ENCODE measurements at regions of chr1 and their contacts with region 1.

Region 1: DNA sequence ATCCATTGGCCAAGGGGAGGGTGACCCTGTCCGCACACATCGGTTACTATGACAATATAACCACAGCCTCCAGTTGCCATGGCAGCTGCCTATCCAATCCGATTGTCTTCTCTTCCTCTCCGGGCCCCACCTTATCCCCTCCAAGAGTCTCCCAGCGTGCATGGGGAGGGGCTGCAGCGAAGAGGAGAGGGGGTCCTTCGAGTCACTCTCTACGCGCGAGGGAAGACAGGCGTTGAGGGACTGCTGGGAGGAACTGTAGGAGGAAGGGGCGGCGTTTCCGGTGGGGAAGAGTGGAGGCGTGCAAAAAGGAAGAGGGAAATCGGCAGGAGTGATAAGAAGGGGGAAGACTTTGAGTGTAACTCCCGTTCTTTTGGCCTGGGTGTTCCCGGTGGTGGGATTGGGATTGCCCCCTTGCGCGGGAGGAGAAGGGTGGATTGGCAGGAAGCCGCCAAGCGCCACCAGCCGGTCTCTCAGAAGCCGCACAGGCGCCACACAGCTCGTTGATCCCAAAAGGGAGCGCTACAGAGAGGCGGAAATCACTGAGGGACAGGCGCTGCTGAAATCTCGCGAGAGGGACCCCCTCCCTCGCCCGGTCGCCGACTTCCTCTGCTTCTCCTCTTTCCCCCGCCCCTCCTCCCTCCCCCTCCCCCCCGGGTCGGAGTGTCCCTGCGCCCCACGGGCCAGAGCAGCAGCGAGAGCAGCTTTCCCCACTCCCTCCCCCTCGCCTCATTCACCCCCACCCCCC is 384 bp upstream of the SMG7 start:
- DNase-seq: peak; percentile 99
- ATAC-seq: peak; percentile 86 to 89 (median 88)
- H3K4me3 ChIP-seq: peak overlapping the region; percentile 98
- H3K27ac ChIP-seq: peak overlapping the region; percentile 99
- H3K4me1 ChIP-seq: peaks cover 37% of the 10 kb centered on the region
- H3K27me3 ChIP-seq: no peaks in the 10 kb centered on the region
- CTCF ChIP-seq: no peak

Region 2: DNA sequence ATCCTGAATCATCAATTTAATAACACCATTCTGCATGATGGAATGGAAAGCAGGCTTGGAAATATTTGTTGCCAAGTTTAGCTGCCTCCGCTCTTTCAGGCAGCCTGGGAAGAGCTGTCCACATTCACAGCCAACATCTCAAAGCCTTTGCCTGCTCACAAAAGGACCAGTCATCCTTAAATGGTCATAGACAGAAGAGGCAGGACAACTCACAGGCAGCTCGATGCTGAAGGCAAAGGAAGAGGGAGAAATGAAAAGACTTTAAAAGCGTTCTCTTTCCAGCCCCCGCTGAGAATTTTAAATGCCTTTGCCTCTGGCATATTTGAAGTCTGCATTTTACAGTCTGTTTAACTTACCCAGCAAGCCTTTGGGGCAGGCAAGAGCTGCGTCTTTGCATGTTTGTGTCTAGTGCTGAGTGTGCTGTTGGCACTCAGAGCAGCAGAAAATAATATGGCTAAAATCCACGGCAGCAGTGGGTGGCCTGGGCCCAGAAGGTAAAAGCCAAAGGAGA is 122.7 kb before region 1 on chr1:
- intact Hi-C with region 1: no loop called
- DNase-seq: no peak
- ATAC-seq: no peak
- H3K4me3 ChIP-seq: no peak overlapping the region
- H3K27ac ChIP-seq: no peak overlapping the region
- H3K4me1 ChIP-seq: peaks cover 4% of the 10 kb centered on the region
- H3K27me3 ChIP-seq: peaks cover 0 to 3% (median 0%) of the 10 kb centered on the region in 3 donors
- CTCF ChIP-seq: no peak

Region 3: GRCh38 chr1:183543619-183544204 is 71.8 kb after region 1 on chr1:
- intact Hi-C with region 1: loop called (anchors 1 to 2 kb)
- DNase-seq: no peak
- ATAC-seq: peak; percentile 43 to 87 (median 70)
- H3K4me3 ChIP-seq: no peak overlapping the region
- H3K27ac ChIP-seq: no peak overlapping the region
- H3K4me1 ChIP-seq: no peaks in the 10 kb centered on the region
- H3K27me3 ChIP-seq: no peaks in the 10 kb centered on the region
- CTCF ChIP-seq: peak; percentile 57

Region 4: GRCh38 chr1:183622884-183623785 is 151.2 kb after region 1 on chr1:
- intact Hi-C with region 1: loop called in 1 of 2 experiments (anchors 5 kb)
- DNase-seq: no peak
- ATAC-seq: peak; percentile 79 to 92 (median 86)
- H3K4me3 ChIP-seq: no peak overlapping the region
- H3K27ac ChIP-seq: no peak overlapping the region
- H3K4me1 ChIP-seq: peaks cover 8% of the 10 kb centered on the region
- H3K27me3 ChIP-seq: no peaks in the 10 kb centered on the region
- CTCF ChIP-seq: peak; percentile 62

Region 5: DNA sequence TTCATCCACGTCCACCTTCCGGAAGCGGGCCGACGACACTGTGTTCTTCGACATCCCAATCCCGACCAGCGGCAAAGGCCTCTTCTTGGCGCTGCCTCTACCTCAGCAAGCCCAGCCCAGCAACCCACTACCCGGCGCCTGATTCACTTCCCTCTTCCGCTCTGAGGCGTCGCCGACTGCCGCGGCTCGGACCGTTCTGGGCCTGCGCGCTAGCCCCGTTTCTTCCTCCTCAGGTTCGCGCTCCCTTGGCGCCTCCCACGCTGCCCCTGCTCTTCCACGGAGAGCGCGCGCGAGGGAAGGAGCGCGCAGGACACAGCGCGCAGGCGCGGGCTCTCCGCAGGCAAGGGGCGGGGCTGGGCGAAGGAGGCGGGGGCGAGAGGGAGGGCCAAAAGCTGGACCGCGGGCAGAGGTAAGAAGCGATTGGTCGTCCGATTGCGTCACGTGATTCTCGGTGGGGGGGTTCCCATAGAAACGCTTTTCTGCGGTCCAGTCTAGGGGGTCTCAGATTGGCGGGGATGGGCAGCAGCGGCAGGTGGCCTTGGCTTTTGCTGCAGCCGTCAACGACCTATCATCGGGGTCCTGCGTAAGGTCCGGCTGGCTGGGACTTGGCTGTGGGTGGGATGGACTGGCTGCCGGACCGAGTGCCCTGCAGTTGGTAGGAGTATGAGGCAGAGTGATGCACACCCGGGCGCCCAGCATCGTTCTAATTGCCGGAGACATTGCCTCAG is 163.9 kb after region 1 on chr1 and contains the start of gene ARPC5:
- intact Hi-C with region 1: loop called in 1 of 2 experiments (anchors 2 kb)
- DNase-seq: peak; percentile 95 to 98
- ATAC-seq: peak; percentile 97
- H3K4me3 ChIP-seq: peak within 1 kb of the TSS; percentile 90
- H3K27ac ChIP-seq: peak within 1 kb of the TSS; percentile 87
- H3K4me1 ChIP-seq: peaks cover 28% of the 10 kb centered on the region
- H3K27me3 ChIP-seq: no peaks in the 10 kb centered on the region
- CTCF ChIP-seq: no peak
- total RNA-seq, gene ARPC5: 11.6 to 17.1 (median 12.7) TPM